PC-9 (cell line): ENCODE measurements at regions of chr16 and their contacts with region 1.

Region 1: GRCh38 chr16:30775392-30776188 is 11.4 kb downstream of the ZNF629 start:
- DNase-seq: peak; percentile 71 to 79
- H3K4me3 ChIP-seq: peak overlapping the region; percentile 84
- H3K27ac ChIP-seq: peak overlapping the region; percentile 73
- H3K4me1 ChIP-seq: peaks cover 8% of the 10 kb centered on the region; the same call in 1 of the 2 replicates
- H3K27me3 ChIP-seq: no peaks in the 10 kb centered on the region
- CTCF ChIP-seq: no peak; the same call in 1 of the 2 replicates

Region 2: DNA sequence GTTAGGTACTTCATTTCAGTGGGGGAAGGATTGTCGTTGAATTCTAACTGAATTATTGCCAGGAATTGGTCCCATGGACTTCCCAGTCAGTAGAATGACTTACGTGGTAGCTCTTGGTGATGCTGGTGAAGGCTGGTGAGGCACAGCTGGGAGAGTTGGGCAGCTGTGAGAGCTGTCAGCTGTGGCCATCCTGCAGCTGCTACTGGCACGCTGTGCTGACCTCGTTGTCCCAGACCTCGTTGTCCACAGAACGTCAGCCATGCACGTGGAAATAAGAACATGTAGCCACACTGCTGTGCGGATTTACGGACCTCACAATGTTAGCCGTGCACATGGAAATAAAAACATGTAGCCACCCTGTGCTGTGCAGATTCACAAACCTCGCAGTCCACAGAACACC is 1471.3 kb before region 1 on chr16:
- CTCF ChIA-PET with region 1: no interaction called
- POLR2A ChIA-PET with region 1: no interaction called
- intact Hi-C with region 1: no loop called
- DNase-seq: no peak
- H3K4me3 ChIP-seq: no peak overlapping the region
- H3K27ac ChIP-seq: no peak overlapping the region
- H3K4me1 ChIP-seq: no peaks in the 10 kb centered on the region
- H3K27me3 ChIP-seq: 0 out of 2 replicates have a peak, but pooled peaks cover 5% of the 10 kb centered on the region
- CTCF ChIP-seq: no peak

Region 3: GRCh38 chr16:30813821-30814189 is 38.2 kb after region 1 on chr16:
- CTCF ChIA-PET with region 1: interaction called, 3 read pairs
- POLR2A ChIA-PET with region 1: interaction called, 6 read pairs
- intact Hi-C with region 1: loop called (anchors 5 kb)
- DNase-seq: no peak
- H3K4me3 ChIP-seq: peak overlapping the region; percentile 53
- H3K27ac ChIP-seq: peak overlapping the region; percentile 16; the same call in 1 of the 2 replicates
- H3K4me1 ChIP-seq: peaks cover 9% of the 10 kb centered on the region
- H3K27me3 ChIP-seq: no peaks in the 10 kb centered on the region
- CTCF ChIP-seq: no peak

Region 4: GRCh38 chr16:30853758-30854157 is 78.2 kb after region 1 on chr16:
- CTCF ChIA-PET with region 1: no interaction called
- POLR2A ChIA-PET with region 1: no interaction called
- intact Hi-C with region 1: no loop called
- DNase-seq: peak in 1 of 2 experiments; percentile 95
- H3K4me3 ChIP-seq: no peak overlapping the region
- H3K27ac ChIP-seq: no peak overlapping the region; the same call in 1 of the 2 replicates
- H3K4me1 ChIP-seq: peaks cover 46% of the 10 kb centered on the region
- H3K27me3 ChIP-seq: no peaks in the 10 kb centered on the region
- CTCF ChIP-seq: no peak